Mammary epithelial cell (primary cell): ENCODE measurements at regions of chr2 and their contacts with region 1.

Region 1: GRCh38 chr2:47386551-47386950 is 16.4 kb upstream of the MSH2 start:
- DNase-seq: no peak
- H3K4me3 ChIP-seq: no peak overlapping the region
- H3K27ac ChIP-seq: no peak overlapping the region
- H3K4me1 ChIP-seq: no peaks in the 10 kb centered on the region
- H3K27me3 ChIP-seq: no peaks in the 10 kb centered on the region
- CTCF ChIP-seq: no peak

Region 2: DNA sequence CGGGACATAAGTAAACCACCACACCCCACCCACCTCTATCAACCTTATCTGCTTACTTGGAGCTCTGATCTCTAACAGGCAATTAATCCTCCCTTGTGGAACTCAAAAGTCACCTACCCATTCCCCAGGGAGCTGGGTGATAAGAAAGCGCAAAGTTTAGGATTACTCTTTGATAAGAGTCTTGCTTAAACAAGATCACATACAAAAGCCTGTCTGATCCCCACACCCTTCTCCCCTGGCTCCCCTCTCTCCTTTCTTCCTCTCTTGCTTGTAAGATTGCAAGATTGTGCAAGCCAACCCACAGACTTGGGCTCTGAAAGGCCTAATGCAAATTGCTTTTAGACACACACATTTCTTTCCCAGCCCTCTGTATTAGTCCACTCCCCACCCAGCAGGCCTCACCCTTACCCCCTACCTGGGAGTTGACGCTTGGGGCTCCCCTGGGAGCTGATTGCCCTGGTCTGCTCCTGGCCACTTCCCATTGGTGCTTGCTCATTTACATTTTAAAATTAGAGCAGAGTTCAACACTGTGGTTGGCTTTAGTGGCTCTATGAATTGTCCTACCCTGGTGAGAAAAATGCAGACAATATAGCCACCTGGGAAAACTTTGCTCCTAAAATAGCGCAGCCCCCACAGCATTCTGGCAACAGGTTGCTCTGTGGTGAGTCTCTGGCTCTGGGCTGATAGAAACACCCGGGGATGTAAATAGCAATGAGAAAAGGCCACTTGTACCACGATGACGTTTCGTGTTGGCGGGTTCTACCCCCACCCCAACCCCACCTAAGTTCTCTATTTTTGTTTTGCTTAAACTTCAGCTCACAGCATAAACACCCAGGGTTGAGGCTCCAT is 76.4 kb before region 1 on chr2:
- CTCF ChIA-PET with region 1: no interaction called
- dilution Hi-C with region 1: no loop called
- in situ Hi-C with region 1: no loop called
- intact Hi-C with region 1: no loop called
- DNase-seq: no peak
- H3K4me3 ChIP-seq: no peak overlapping the region
- H3K27ac ChIP-seq: no peak overlapping the region
- H3K4me1 ChIP-seq: peaks cover 14% of the 10 kb centered on the region
- H3K27me3 ChIP-seq: no peaks in the 10 kb centered on the region
- CTCF ChIP-seq: no peak

Region 3: DNA sequence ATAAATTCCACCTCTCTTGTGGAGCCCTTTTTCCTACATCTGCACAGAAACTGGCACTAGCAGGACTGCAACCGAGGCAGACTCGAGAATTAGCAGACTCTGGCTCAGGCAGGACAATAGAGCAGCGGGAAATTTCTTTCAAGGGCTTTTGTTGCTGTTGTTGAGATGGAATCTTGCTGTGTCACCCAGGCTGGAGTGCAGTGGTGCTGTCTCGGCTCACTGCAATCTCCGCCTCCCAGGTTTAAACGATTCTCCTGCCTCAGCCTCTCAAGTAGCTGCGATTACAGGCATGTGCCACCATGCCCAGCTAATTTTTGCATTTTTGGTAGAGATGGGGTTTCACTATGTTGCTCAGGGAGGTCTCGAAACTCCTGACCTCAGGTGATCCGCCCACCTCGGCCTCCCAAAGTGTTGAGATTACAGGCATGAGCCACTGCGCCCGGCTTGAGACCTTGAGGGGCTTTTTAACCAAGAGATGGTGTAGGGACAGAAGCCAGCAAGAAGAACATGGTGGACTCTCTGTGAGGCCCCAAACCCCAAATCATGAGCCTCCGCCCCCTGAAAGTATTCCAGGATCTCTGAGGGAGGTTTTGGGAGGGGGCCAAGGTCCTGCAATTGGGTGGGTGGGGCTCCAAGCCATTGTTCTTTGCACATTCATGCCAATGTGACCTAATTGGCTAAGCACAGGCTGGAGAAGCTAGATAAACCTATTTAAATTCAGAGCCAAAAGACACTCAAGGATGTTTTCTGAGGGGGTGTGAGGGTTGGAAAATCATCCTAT is 52.0 kb before region 1 on chr2:
- CTCF ChIA-PET with region 1: interaction called, 60 read pairs
- dilution Hi-C with region 1: no loop called
- in situ Hi-C with region 1: loop called (anchors 5 kb)
- intact Hi-C with region 1: loop called (anchors 1 kb)
- DNase-seq: no peak
- H3K4me3 ChIP-seq: no peak overlapping the region
- H3K27ac ChIP-seq: no peak overlapping the region
- H3K4me1 ChIP-seq: peaks cover 4% of the 10 kb centered on the region
- H3K27me3 ChIP-seq: no peaks in the 10 kb centered on the region
- CTCF ChIP-seq: no peak

Region 4: GRCh38 chr2:47339745-47340541 is 46.6 kb before region 1 on chr2:
- CTCF ChIA-PET with region 1: interaction called, 60 read pairs
- dilution Hi-C with region 1: no loop called
- in situ Hi-C with region 1: loop called (anchors 5 kb)
- intact Hi-C with region 1: loop called (anchors 1 kb)
- DNase-seq: peak; percentile 96
- H3K4me3 ChIP-seq: no peak overlapping the region
- H3K27ac ChIP-seq: no peak overlapping the region
- H3K4me1 ChIP-seq: peaks cover 16% of the 10 kb centered on the region
- H3K27me3 ChIP-seq: no peaks in the 10 kb centered on the region
- CTCF ChIP-seq: no peak